MCF 10A (cell line): ENCODE measurements at regions of chr10 and their contacts with region 1.

Region 1: GRCh38 chr10:24488631-24489030 is 235.1 kb downstream of the ARHGAP21 start:
- DNase-seq: no peak
- H3K4me3 Mint-ChIP-seq: no peak overlapping the region
- H3K27ac Mint-ChIP-seq: no peak overlapping the region
- H3K4me1 Mint-ChIP-seq: peaks cover 35% of the 10 kb centered on the region
- H3K27me3 Mint-ChIP-seq: no peaks in the 10 kb centered on the region
- CTCF ChIP-seq: no peak

Region 2: GRCh38 chr10:24449321-24449740 is 39.3 kb before region 1 on chr10:
- CTCF ChIA-PET with region 1: no interaction called
- POLR2A ChIA-PET with region 1: interaction called, 60 read pairs
- intact Hi-C with region 1: no loop called
- DNase-seq: no peak
- H3K4me3 Mint-ChIP-seq: no peak overlapping the region
- H3K27ac Mint-ChIP-seq: no peak overlapping the region
- H3K4me1 Mint-ChIP-seq: peaks cover 19% of the 10 kb centered on the region
- H3K27me3 Mint-ChIP-seq: no peaks in the 10 kb centered on the region
- CTCF ChIP-seq: no peak